ENCODE measurements at regions of chr1 and their contacts with region 1.

Region 1: DNA sequence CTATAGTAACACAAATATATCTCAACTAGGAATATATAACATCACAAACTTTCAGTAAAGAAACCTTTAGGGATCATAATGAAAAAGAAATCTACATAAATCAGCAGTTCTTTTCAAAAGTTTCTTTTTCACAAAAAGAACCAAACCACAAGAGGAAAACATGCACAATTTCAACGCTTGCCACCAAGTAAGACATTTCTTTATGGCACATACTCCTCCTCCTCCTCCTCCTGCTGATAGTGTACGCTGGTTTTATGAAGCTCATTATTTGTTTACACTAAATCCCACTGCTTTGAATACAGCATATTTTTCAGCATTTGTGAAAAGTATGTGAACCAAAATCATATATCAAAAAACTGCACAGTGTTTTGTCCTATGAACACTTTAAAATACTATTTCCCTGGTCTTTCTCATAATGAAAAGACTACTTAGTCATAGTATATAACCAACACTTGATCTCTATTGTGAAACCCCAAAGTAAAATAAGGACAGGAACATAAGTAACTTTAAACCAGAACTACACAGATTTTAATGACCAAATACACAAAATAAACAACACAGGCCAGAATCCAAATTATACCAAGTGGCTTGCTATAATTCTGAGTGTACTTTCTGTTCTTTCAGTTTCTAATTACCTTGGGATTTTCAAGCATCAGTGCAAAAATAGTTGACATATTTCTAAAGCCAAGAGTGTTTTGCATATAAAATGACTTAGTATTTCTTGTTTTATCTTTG is 184.2 kb downstream of the EIF4G3 start:
- DNase-seq: no peak
- H3K4me3 ChIP-seq: no peak overlapping the region
- H3K27ac ChIP-seq: no peak overlapping the region
- H3K4me1 ChIP-seq: no peaks in the 10 kb centered on the region
- H3K27me3 ChIP-seq: no peaks in the 10 kb centered on the region
- CTCF ChIP-seq: no peak
- POLR2A ChIP-seq: no peak

Region 2: GRCh38 chr1:20981915-20982314 is 10.6 kb before region 1 on chr1:
- CTCF ChIA-PET with region 1: interaction called, 12 read pairs
- POLR2A ChIA-PET with region 1: no interaction called
- dilution Hi-C with region 1: no loop called
- intact Hi-C with region 1: no loop called
- DNase-seq: peak; percentile 48
- H3K4me3 ChIP-seq: no peak overlapping the region
- H3K27ac ChIP-seq: no peak overlapping the region
- H3K4me1 ChIP-seq: peaks cover 9% of the 10 kb centered on the region
- H3K27me3 ChIP-seq: no peaks in the 10 kb centered on the region
- CTCF ChIP-seq: peak in 1 of 2 donors; percentile 11
- POLR2A ChIP-seq: no peak